AG04450 (cell line): ENCODE measurements at regions of chr6 and their contacts with region 1.

Region 1: DNA sequence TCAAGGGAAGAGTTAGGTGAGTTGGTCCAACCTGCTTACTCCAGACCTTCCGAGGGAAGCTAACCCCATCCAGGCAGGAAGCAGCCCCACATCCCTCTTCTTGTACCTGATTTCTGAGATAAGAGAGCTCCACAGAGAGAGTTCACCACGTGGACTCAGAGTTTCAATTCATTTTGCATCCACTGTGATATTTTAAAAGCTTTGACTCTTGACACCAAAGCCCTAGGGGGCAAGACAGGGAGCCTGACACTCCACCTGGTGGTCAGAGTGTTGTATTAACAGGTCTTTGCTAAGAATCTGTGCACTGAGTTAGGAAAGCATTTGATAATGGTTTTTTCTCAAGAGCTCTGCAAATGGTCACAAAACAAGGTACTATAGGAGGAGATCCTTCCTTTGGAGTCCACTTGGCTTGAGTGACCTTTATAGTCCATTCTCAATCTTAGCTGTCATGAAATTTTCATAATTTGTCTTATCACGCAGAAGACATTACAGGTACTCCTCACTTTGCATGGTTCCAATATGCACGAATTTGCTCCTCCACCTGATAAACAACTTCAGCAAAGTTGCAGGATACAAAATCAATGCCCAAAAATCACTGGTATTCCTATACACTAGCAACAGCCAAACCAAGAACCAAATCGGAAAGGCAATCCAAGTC is 56.2 kb upstream of the RIPOR2 start:
- DNase-seq: no peak
- H3K4me3 ChIP-seq: no peak overlapping the region
- H3K27ac ChIP-seq: no peak overlapping the region
- H3K27me3 ChIP-seq: no peaks in the 10 kb centered on the region
- CTCF ChIP-seq: peak; percentile 70

Region 2: GRCh38 chr6:24883618-24884017 is 108.3 kb before region 1 on chr6:
- CTCF ChIA-PET with region 1: interaction called, 12 read pairs
- POLR2A ChIA-PET with region 1: no interaction called
- DNase-seq: peak; percentile 80
- H3K4me3 ChIP-seq: 0 out of 2 replicates have a peak overlapping the region, but pooled peaks have one; percentile 18
- H3K27ac ChIP-seq: peak overlapping the region; percentile 62
- H3K27me3 ChIP-seq: no peaks in the 10 kb centered on the region
- CTCF ChIP-seq: no peak

Region 3: GRCh38 chr6:24933868-24934401 is 58.0 kb before region 1 on chr6:
- CTCF ChIA-PET with region 1: interaction called, 14 read pairs
- POLR2A ChIA-PET with region 1: no interaction called
- DNase-seq: no peak
- H3K4me3 ChIP-seq: no peak overlapping the region
- H3K27ac ChIP-seq: no peak overlapping the region
- H3K27me3 ChIP-seq: no peaks in the 10 kb centered on the region
- CTCF ChIP-seq: peak; percentile 35; the same call in 1 of the 2 replicates

Region 4: GRCh38 chr6:24980507-24981387 is 11.2 kb before region 1 on chr6:
- CTCF ChIA-PET with region 1: interaction called, 27 read pairs
- POLR2A ChIA-PET with region 1: no interaction called
- DNase-seq: no peak
- H3K4me3 ChIP-seq: no peak overlapping the region
- H3K27ac ChIP-seq: no peak overlapping the region
- H3K27me3 ChIP-seq: no peaks in the 10 kb centered on the region
- CTCF ChIP-seq: no peak

Region 5: DNA sequence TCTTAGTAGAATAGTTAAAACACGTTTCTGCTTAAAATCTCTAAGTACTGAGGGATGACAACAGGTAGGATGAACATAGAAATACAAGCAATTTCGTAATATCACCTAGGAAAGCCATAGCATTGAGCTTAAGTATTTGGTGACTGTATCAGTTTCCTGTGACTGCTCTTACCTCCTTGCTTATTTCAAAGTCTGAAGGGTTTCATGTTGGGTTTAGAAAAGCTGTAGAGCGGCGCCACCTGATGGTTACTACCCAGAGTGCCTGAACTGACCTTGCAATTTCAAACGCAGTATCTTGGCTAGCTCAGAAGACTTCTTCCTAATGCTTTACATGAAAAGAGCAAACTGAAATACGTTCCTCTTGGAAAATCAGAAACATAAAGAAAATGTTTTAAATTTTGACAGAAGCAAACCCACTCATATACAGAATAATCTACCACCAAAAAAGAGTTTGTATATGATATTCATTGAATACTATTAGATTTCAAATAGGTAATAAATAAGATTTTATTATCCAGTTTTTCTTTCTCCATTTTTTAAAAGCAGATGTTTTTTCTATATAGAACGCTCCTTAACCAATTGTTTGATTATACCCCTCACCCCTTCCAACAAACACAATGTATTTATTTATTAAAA is 26.1 kb after region 1 on chr6:
- CTCF ChIA-PET with region 1: interaction called, 11 read pairs
- POLR2A ChIA-PET with region 1: no interaction called
- DNase-seq: no peak
- H3K4me3 ChIP-seq: no peak overlapping the region
- H3K27ac ChIP-seq: no peak overlapping the region
- H3K27me3 ChIP-seq: no peaks in the 10 kb centered on the region
- CTCF ChIP-seq: peak; percentile 57

Region 6: GRCh38 chr6:25070547-25071366 is 78.8 kb after region 1 on chr6:
- CTCF ChIA-PET with region 1: interaction called, 23 read pairs
- POLR2A ChIA-PET with region 1: no interaction called
- DNase-seq: peak; percentile 72
- H3K4me3 ChIP-seq: no peak overlapping the region
- H3K27ac ChIP-seq: no peak overlapping the region
- H3K27me3 ChIP-seq: no peaks in the 10 kb centered on the region
- CTCF ChIP-seq: peak; percentile 94